ENCODE measurements at regions of chr1 and their contacts with region 1.

Region 1: GRCh38 chr1:175373786-175374623 is 181.4 kb upstream of the KIAA0040 start:
- DNase-seq: no peak
- H3K4me3 ChIP-seq: no peak overlapping the region
- H3K27ac ChIP-seq: no peak overlapping the region
- H3K4me1 ChIP-seq: no peaks in the 10 kb centered on the region
- H3K27me3 ChIP-seq: no peaks in the 10 kb centered on the region
- CTCF ChIP-seq: peak in 3 of 4 experiments; percentile 16 to 43 (median 37)
- POLR2A ChIP-seq: no peak

Region 2: GRCh38 chr1:175250027-175250426 is 124.0 kb before region 1 on chr1:
- intact Hi-C with region 1: no loop called
- DNase-seq: no peak
- H3K4me3 ChIP-seq: no peak overlapping the region
- H3K27ac ChIP-seq: no peak overlapping the region
- H3K4me1 ChIP-seq: no peaks in the 10 kb centered on the region
- H3K27me3 ChIP-seq: no peaks in the 10 kb centered on the region
- CTCF ChIP-seq: no peak
- POLR2A ChIP-seq: no peak

Region 3: DNA sequence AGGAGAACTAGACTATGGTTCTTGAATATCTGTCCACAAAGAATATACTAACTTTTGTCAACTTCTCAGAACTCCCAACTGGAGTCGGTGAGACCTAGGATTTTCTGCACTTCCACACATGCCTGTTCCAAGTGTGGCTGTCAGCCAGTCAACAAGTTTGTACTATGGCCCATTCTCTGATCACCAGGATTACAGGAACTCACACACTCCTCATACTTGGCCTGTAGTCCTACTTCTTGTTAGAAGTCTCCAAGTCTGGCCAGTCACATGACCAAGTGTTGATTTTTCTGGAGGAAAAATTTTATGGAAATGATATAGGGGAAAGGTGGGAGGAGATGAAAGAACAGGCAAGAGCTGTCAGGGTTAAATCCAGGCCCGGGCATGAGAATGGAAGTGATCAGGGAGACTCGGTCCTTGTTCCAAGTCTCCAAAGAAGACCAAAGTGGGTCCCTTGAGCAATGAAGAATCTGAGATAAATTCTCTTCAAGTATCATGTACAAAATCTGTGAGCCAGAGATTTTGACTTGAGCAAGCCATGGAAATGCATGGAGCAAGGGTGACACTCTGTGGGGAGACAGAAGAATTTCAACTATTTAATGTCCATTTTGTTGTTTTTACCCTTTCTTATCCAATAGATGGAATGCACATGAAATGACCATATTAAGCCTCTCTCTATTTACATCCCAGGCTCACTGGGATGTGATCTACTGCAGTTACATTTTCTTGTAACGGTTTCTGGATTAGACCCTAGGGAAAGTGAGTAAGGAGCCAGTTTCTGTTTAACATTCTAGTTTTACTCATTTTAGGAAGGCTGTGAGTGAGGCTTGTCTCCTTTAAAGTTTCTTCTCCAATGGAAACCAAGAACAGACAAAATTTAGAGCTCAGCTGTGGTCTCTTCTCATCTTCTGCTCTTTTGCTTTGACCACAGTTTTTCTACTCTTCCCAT is 1469.6 kb after region 1 on chr1:
- intact Hi-C with region 1: loop called (anchors 10 kb)
- DNase-seq: no peak
- H3K4me3 ChIP-seq: no peak overlapping the region
- H3K27ac ChIP-seq: no peak overlapping the region
- H3K4me1 ChIP-seq: no peaks in the 10 kb centered on the region
- H3K27me3 ChIP-seq: no peaks in the 10 kb centered on the region
- CTCF ChIP-seq: peak in 3 of 4 experiments; percentile 56 to 71 (median 62)
- POLR2A ChIP-seq: no peak

Measured in prostate gland (tissue), 2 donors.